Heart right ventricle (tissue), 16 donors: ENCODE measurements at regions of chr7 and their contacts with region 1.

Region 1: DNA sequence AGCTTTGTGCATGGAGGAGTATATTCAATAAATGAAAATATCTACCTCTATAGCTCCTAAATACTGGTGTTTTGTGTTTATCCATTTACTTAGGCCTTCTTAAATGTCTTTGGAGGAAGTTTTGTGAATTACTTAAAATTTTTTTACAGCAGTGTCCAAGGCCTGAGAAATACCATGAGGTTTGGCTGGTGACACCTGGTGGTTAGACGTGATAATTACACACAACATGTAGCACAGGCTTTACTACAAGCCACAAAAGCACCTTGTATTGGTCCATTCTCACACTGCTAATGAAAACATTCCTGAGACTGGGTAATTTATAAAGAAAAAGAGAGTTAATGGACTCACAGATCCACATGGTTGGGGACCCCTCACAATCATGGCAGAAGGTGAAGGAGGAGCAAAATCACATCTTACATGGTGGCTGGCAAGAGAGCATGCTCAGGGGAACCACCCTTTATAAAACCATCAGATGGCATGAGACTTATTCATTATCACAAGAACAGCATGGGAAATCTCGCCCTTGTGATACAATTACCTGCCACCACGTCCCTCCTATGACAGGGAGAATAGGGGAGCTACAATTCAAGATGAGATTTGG is 20.6 kb downstream of the HYAL4 start:
- DNase-seq: peak in 1 of 2 donors; percentile 51
- ATAC-seq: peak; percentile 67 to 88 (median 78)
- H3K4me3 ChIP-seq: no peak overlapping the region
- H3K27ac ChIP-seq: no peak overlapping the region
- H3K4me1 ChIP-seq: peaks cover 0 to 14% (median 3%) of the 10 kb centered on the region in 9 donors
- H3K27me3 ChIP-seq: no peaks in the 10 kb centered on the region
- CTCF ChIP-seq: peak; percentile 73 to 85 (median 77)

Region 2: DNA sequence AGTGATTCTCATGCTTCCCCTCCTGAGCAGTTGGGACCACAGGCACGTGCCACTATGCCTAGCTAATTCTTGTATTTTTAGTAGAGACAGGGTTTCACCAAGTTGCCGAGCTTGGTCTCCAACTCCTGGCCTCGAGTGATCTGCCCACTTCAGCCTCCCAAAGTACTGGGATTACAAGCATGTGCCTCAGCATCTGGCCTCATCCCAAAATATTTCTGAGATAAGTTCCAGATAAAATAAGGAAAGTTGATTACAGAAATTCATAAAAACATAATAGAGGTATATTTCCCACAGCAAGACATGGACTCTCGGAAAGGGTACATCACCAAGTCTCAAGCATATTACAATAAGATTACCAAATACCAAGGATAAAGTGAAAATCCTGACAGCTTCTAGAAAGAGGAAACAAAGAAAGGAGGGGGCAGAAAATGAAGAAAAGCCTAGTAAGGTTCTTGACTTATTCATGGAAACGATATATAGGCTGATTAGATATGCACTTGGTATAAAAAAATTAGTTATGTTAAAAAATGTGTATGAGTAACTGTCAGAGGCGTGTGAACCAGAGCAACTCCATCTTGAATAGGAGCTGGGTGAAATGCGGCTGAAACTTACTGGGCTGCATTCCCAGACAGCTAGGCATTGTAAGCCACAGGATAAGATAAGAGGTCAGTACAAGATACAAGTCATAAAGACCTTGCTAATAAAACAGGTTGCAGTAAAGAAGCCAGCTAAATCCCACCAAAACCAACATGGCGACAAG is 366.2 kb before region 1 on chr7:
- intact Hi-C with region 1: loop called in 9 of 10 experiments (anchors 5 to 10 kb)
- DNase-seq: no peak
- ATAC-seq: no peak
- H3K4me3 ChIP-seq: no peak overlapping the region
- H3K27ac ChIP-seq: no peak overlapping the region
- H3K4me1 ChIP-seq: peaks cover 0 to under 1% (median 0%) of the 10 kb centered on the region in 9 donors
- H3K27me3 ChIP-seq: no peaks in the 10 kb centered on the region
- CTCF ChIP-seq: no peak

Region 3: DNA sequence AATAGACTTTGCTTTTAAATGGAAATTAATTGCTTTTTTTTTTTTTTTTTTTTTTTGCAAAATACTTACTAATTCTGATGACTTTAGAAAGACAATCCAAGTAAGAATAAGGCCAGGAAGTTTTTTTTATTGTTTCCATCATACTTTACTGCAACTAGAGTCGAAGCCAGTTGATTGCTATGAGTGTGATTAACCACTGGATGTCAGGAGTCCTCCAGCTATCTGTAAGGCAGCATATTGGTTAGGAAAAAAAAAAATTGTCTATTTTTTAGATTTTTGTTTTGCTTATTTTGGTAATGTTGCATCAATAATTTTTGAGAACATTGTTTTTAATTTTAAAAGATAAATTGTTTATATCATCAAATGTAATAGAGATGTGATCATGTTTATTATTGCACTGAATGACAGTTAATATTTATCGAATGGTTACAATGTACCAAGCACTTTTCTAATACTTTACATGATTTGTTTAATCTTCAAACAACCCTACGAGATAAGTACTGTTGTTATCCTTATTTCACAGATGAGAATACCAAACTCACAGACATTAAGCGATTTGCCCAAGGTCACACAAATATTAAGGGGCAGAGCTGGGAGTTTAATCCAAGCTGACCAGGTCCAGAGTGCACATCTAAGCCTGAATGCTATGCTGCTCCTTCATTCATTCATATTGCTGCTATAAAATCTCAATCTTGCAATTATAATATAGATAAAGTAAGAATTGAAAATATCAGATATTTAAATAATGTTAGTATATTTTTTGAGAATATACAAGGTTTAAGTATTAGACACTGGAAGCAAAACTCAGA is 229.9 kb before region 1 on chr7:
- intact Hi-C with region 1: loop called in 5 of 10 experiments (anchors 2 to 5 kb)
- DNase-seq: no peak
- ATAC-seq: peak in 7 of 8 donors; percentile 63 to 78 (median 73)
- H3K4me3 ChIP-seq: no peak overlapping the region
- H3K27ac ChIP-seq: peak overlapping the region in 2 of 10 donors; percentile 27 to 70
- H3K4me1 ChIP-seq: peaks cover 3 to 30% (median 9%) of the 10 kb centered on the region in 9 donors
- H3K27me3 ChIP-seq: no peaks in the 10 kb centered on the region
- CTCF ChIP-seq: peak in 8 of 9 donors; percentile 39 to 78 (median 63)

Region 4: GRCh38 chr7:123692471-123692877 is 173.1 kb before region 1 on chr7:
- intact Hi-C with region 1: loop called in 3 of 10 experiments (anchors 2 to 10 kb)
- DNase-seq: no peak
- ATAC-seq: peak in 4 of 8 donors; percentile 9 to 41 (median 30)
- H3K4me3 ChIP-seq: no peak overlapping the region
- H3K27ac ChIP-seq: no peak overlapping the region
- H3K4me1 ChIP-seq: no peaks in the 10 kb centered on the region
- H3K27me3 ChIP-seq: no peaks in the 10 kb centered on the region
- CTCF ChIP-seq: no peak

Region 5: DNA sequence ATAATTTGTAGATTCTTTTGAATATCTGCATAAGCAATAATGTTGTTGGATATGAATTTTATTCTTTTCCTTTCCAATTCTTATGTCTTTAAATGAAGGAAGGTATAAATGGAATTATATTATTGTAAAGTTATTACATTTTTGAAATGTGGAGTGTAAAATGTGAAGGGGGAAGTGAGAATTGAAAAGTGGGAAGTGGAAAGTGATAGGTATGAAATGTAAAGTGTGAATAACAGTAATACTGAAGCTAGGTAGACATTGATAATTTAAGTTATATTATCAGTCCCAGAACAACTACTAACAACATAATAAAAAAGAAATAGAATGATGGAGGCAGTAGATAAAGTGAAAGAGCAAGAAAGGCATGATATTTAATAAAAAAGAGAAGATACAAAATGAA is 60.3 kb before region 1 on chr7:
- intact Hi-C with region 1: loop called in 2 of 10 experiments (anchors 5 to 10 kb)
- DNase-seq: no peak
- ATAC-seq: no peak
- H3K4me3 ChIP-seq: no peak overlapping the region
- H3K27ac ChIP-seq: no peak overlapping the region
- H3K4me1 ChIP-seq: no peaks in the 10 kb centered on the region
- H3K27me3 ChIP-seq: no peaks in the 10 kb centered on the region
- CTCF ChIP-seq: no peak